Activated CD8-positive, alpha-beta memory T cell treated with anti-CD3 and anti-CD28 coated beads, Interleukin-2, amount 10 ng/mL, durations not matched to agents 7 days and 5 days (primary cell): ENCODE measurements at regions of chr22 and their contacts with region 1.

Region 1: DNA sequence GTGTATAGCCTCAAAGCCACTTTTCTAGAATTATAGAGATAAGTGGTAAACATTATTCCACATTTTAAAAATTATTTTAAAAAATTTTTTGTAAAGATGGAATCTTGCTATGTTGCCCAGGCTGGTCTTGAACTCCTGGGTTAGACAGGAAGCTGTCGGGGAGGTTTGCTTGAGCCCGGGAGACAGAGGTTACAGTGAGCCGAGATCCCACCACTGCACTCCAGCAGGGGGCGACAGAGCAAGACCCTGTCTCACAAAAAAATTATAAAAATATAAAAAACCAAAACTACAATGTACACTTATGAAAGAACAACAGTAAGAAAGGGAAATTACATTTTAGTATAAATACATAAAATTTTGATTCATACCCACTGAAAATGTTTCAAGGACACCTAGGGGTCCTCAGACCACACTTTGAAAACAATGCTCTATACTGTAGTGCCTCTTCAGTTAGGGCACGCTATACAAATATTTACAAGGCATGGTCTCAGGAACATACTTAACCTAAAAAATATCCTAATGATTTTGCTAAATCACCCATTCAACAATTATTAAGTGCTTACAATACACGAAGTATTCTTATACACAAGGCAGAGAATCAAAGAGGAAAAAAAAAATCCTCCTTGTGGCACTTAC is 111.2 kb downstream of the MRTFA start:
- DNase-seq: peak; percentile 78
- ATAC-seq: peak; percentile 81
- H3K4me3 Mint-ChIP-seq: no peak overlapping the region
- H3K27ac Mint-ChIP-seq: no peak overlapping the region
- H3K4me1 Mint-ChIP-seq: peaks cover 27% of the 10 kb centered on the region
- H3K27me3 Mint-ChIP-seq: no peaks in the 10 kb centered on the region

Region 2: GRCh38 chr22:40636380-40637182 is 111.2 kb after region 1 on chr22 and contains the start of gene MRTFA:
- CTCF ChIA-PET with region 1: interaction called, 12 read pairs
- DNase-seq: peak; percentile 100
- ATAC-seq: peak; percentile 96
- H3K4me3 Mint-ChIP-seq: peak within 1 kb of the TSS; percentile 94
- H3K27ac Mint-ChIP-seq: peak within 1 kb of the TSS; percentile 98
- H3K4me1 Mint-ChIP-seq: peaks cover 26% of the 10 kb centered on the region
- H3K27me3 Mint-ChIP-seq: no peaks in the 10 kb centered on the region
- total RNA-seq, gene MRTFA: 59.4 to 74.0 TPM

Region 3: DNA sequence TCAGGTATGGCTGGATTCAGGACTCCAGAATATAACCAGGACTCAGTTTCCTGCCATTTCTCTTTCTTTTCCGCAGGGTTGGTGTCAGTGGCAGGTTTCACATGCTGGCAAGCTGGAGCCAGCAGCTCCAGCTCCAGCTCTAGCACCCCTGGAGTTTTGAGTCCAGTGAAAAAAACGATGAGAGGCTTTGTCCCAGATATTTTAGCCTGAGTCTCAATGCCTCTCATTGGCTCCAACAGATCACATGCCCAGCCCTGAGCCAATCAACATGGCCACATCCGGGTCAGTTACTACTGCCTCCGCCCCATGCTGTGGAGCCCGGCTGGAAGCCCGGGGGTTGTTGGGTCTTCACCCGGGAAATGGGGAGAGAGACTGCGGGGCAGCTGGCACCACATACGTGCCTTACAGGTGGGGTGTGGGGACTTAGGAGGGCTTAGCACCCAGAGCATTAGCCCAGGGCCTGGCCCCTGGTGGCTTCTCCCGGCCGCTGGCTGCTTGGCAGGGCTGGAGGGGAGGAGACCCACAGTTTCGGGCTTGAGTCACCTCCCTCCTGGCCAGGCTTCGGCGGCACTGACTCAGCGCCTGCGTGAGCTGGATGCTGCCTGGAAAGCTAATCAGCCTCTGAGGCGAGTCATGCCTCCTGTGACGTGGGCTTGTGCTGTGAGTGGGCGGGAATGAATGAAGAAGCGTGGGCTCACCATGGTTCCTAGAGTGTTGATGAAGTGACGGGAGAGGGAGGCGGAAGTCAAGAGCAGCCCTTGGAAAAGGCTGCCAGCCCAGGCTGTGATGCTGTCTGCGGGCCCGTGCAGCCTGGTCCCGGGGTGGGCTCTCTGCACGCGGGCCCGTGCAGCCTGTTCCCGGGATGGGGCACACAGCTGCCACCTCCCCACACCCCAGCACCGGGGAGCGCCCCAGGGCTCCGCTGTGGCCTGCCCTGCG is 126.5 kb after region 1 on chr22:
- CTCF ChIA-PET with region 1: interaction called, 88 read pairs
- DNase-seq: peak; percentile 91
- ATAC-seq: peak; percentile 96
- H3K4me3 Mint-ChIP-seq: peak overlapping the region; percentile 59
- H3K27ac Mint-ChIP-seq: peak overlapping the region; percentile 68
- H3K4me1 Mint-ChIP-seq: peaks cover 26% of the 10 kb centered on the region
- H3K27me3 Mint-ChIP-seq: no peaks in the 10 kb centered on the region